ENCODE measurements at regions of chr13 and their contacts with region 1.

Region 1: DNA sequence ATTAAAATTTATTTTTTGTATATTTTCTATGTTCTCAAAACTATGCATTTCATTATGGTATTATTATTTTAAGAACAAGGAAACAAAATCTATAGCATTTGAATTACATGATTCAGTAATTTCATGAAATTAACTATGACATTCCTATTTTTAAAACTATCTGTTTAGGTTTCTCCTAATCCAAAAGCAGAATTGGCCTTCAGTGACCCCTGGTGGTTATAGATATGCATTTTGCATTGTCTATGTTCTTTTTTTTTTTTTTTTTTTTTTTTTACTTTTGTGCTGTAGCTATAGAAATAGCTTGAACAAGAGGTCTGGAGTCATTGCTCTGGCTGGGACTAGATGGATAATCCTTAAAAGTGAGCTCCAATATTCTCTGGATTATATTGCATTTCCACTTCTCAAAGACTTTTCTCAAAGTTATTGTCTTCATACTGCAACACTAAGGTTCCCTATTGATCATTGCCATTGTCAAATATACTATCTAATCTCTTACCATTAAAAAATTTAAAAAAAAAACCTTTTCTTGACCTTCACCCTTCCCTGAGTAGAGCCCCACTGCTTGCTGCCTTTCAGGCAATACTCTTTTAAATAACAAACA is 15.9 kb upstream of the DNAJC3 start:
- DNase-seq: no peak
- H3K4me3 Mint-ChIP-seq: no peak overlapping the region
- H3K27ac Mint-ChIP-seq: no peak overlapping the region
- H3K4me1 Mint-ChIP-seq: no peaks in the 10 kb centered on the region
- H3K27me3 Mint-ChIP-seq: peaks cover 21% of the 10 kb centered on the region

Region 2: DNA sequence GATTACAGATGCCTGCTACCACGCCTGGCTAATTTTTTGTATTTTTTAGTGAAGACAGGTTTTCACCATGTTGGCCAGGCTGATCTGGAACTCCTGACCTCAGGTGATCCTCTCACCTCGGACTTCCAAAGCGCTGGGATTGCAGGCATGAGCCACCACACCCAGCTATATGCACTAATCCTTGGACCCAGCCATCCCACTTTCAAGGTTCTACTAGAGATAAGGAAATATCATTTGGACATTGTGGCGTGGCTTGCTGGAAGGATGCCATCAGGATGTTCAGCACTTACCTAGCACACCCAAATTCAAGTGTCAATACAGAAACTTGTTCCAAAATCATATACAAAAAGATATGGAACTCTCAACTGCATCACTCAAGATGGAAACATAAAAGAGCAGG is 496.3 kb before region 1 on chr13:
- intact Hi-C with region 1: no loop called
- DNase-seq: no peak
- H3K4me3 Mint-ChIP-seq: no peak overlapping the region
- H3K27ac Mint-ChIP-seq: no peak overlapping the region
- H3K4me1 Mint-ChIP-seq: no peaks in the 10 kb centered on the region
- H3K27me3 Mint-ChIP-seq: no peaks in the 10 kb centered on the region

Region 3: GRCh38 chr13:95509521-95510310 is 151.4 kb before region 1 on chr13:
- intact Hi-C with region 1: no loop called
- DNase-seq: no peak
- H3K4me3 Mint-ChIP-seq: no peak overlapping the region
- H3K27ac Mint-ChIP-seq: no peak overlapping the region
- H3K4me1 Mint-ChIP-seq: no peaks in the 10 kb centered on the region
- H3K27me3 Mint-ChIP-seq: no peaks in the 10 kb centered on the region

Region 4: GRCh38 chr13:95536632-95537241 is 124.3 kb before region 1 on chr13:
- intact Hi-C with region 1: loop called (anchors 1 kb)
- DNase-seq: no peak
- H3K4me3 Mint-ChIP-seq: no peak overlapping the region
- H3K27ac Mint-ChIP-seq: no peak overlapping the region
- H3K4me1 Mint-ChIP-seq: peaks cover 8% of the 10 kb centered on the region
- H3K27me3 Mint-ChIP-seq: peaks cover 10% of the 10 kb centered on the region

Region 5: GRCh38 chr13:95624020-95624419 is 37.1 kb before region 1 on chr13:
- intact Hi-C with region 1: loop called (anchors 1 kb)
- DNase-seq: no peak
- H3K4me3 Mint-ChIP-seq: no peak overlapping the region
- H3K27ac Mint-ChIP-seq: no peak overlapping the region
- H3K4me1 Mint-ChIP-seq: no peaks in the 10 kb centered on the region
- H3K27me3 Mint-ChIP-seq: peaks cover 6% of the 10 kb centered on the region

Region 6: DNA sequence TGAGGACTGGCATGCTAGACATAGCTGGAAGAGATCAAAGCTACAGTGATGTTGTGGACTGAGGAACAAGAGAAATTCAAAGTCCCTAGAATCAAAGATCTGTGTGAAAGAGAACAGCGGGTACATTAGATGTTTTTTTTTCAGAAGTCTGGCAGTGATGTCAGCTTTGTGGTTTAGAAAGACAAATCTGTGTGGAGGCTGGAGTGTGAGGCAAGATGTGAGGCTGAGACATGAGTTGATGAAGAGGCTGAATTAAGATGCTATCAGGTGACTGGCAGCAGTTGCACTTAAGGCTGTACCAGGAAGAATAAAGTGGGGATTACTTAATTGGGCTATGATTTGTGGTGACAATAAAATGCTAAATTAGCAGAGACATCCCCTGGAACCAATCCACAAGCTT is 62.4 kb after region 1 on chr13:
- intact Hi-C with region 1: no loop called
- DNase-seq: no peak
- H3K4me3 Mint-ChIP-seq: no peak overlapping the region
- H3K27ac Mint-ChIP-seq: no peak overlapping the region
- H3K4me1 Mint-ChIP-seq: peaks cover 7% of the 10 kb centered on the region
- H3K27me3 Mint-ChIP-seq: no peaks in the 10 kb centered on the region

Measured in activated T-helper 1 cell treated with anti-CD3 and anti-CD28 coated beads, Interleukin-12 subunit alpha, Interleukin-12 subunit beta, Interleukin-2, Interleukin-4 antibody, amounts not matched to agents 30 ng/mL and 10 ng/mL and 1 ng/mL, durations not matched to agents 14 hours and 24 hours and 36 hours (primary cell).